ENCODE measurements at regions of chr11 and their contacts with region 1.

Region 1: GRCh38 chr11:1694064-1694845 is 2.7 kb upstream of the KRTAP5-6 start:
- DNase-seq: peak; percentile 74
- H3K4me3 Mint-ChIP-seq: no peak overlapping the region
- H3K27ac Mint-ChIP-seq: no peak overlapping the region
- H3K4me1 Mint-ChIP-seq: peaks cover 4% of the 10 kb centered on the region
- H3K27me3 Mint-ChIP-seq: peaks cover 17% of the 10 kb centered on the region

Region 2: GRCh38 chr11:1592628-1593027 is 101.6 kb before region 1 on chr11:
- CTCF ChIA-PET with region 1: no interaction called
- POLR2A ChIA-PET with region 1: no interaction called
- DNase-seq: no peak
- H3K4me3 Mint-ChIP-seq: no peak overlapping the region
- H3K27ac Mint-ChIP-seq: no peak overlapping the region
- H3K4me1 Mint-ChIP-seq: peaks cover 22% of the 10 kb centered on the region
- H3K27me3 Mint-ChIP-seq: peaks cover 43% of the 10 kb centered on the region

Region 3: DNA sequence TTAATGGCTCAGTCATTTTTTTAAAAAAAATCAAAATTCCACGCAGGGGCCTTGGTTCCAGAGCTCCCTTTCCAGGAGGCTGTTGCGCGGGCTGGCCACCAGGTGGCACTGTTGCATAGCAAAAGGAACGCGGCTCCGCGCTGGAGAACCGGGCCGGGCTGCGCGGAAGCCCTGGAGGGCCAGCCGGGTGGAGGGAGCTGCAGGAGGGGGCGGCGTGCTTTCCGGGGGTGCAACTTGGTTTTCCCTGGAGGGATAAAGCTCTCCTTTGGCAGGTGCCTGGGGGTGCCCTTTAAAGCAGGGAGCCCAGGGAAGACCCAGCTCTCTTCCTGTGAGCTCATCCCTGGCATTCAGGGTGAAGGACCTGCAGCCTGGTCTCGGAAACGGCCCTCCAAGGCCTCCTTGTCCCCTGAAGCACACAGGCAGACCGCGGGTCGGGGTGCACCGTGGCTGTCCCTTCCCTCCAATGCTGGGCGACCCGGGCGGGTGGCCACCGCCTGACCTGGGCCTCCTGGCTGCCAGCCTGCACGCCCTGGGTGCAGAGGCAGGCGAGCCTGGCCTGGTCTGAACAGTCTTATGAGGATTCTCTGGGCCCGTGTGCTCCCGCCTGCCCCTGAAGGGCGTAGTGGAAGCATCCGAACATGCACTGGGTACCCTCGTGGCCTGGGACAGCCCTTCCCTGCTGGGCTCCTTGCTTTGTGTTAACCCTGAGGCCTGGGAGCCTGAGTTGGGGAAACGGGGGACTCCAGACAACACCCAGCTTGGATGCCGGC is 41.3 kb before region 1 on chr11:
- CTCF ChIA-PET with region 1: interaction called, 34 read pairs
- POLR2A ChIA-PET with region 1: no interaction called
- DNase-seq: peak; percentile 77
- H3K4me3 Mint-ChIP-seq: no peak overlapping the region
- H3K27ac Mint-ChIP-seq: no peak overlapping the region
- H3K4me1 Mint-ChIP-seq: no peaks in the 10 kb centered on the region
- H3K27me3 Mint-ChIP-seq: peaks cover 3% of the 10 kb centered on the region

Region 4: GRCh38 chr11:1837171-1838076 is 143.2 kb after region 1 on chr11:
- CTCF ChIA-PET with region 1: interaction called, 139 read pairs
- POLR2A ChIA-PET with region 1: no interaction called
- DNase-seq: peak; percentile 87
- H3K4me3 Mint-ChIP-seq: no peak overlapping the region
- H3K27ac Mint-ChIP-seq: no peak overlapping the region
- H3K4me1 Mint-ChIP-seq: peaks cover 12% of the 10 kb centered on the region
- H3K27me3 Mint-ChIP-seq: no peaks in the 10 kb centered on the region

Region 5: DNA sequence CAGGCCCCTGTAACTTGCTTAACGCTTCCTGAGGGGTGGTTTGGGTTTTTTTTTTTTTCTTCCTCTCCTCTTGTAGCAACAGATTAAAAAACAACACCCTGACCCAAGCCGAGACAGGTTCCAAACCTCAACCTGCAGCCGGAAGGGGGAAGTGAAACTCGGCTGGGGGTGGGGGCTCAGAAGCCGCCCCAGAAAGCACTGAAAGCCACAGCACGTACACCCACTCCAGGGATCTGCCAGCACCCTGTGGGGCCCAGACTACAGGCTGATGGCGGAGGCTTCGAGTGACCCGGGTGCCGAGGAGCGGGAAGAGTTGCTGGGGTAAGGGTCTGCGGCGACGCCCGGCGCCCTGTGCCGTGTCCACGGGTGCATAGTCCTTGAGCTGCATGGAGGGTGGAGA is 158.6 kb after region 1 on chr11 and contains the start of gene LSP1:
- CTCF ChIA-PET with region 1: interaction called, 18 read pairs
- POLR2A ChIA-PET with region 1: no interaction called
- DNase-seq: peak; percentile 92
- H3K4me3 Mint-ChIP-seq: peak within 1 kb of the TSS; percentile 99
- H3K27ac Mint-ChIP-seq: peak within 1 kb of the TSS; percentile 96
- H3K4me1 Mint-ChIP-seq: peaks cover 61% of the 10 kb centered on the region
- H3K27me3 Mint-ChIP-seq: no peaks in the 10 kb centered on the region
- total RNA-seq, gene LSP1: 668 to 687 TPM

Region 6: GRCh38 chr11:2151500-2152257 is 457.4 kb after region 1 on chr11:
- CTCF ChIA-PET with region 1: interaction called, 17 read pairs
- POLR2A ChIA-PET with region 1: no interaction called
- DNase-seq: peak; percentile 82
- H3K4me3 Mint-ChIP-seq: no peak overlapping the region
- H3K27ac Mint-ChIP-seq: no peak overlapping the region
- H3K4me1 Mint-ChIP-seq: peaks cover 5% of the 10 kb centered on the region
- H3K27me3 Mint-ChIP-seq: peaks cover 37% of the 10 kb centered on the region

Measured in activated CD4-positive, alpha-beta T cell treated with anti-CD3 and anti-CD28 coated beads, Interleukin-2, amount 10 ng/mL, durations not matched to agents 7 days and 5 days (primary cell).